ENCODE measurements at regions of chr12 and their contacts with region 1.

Region 1: DNA sequence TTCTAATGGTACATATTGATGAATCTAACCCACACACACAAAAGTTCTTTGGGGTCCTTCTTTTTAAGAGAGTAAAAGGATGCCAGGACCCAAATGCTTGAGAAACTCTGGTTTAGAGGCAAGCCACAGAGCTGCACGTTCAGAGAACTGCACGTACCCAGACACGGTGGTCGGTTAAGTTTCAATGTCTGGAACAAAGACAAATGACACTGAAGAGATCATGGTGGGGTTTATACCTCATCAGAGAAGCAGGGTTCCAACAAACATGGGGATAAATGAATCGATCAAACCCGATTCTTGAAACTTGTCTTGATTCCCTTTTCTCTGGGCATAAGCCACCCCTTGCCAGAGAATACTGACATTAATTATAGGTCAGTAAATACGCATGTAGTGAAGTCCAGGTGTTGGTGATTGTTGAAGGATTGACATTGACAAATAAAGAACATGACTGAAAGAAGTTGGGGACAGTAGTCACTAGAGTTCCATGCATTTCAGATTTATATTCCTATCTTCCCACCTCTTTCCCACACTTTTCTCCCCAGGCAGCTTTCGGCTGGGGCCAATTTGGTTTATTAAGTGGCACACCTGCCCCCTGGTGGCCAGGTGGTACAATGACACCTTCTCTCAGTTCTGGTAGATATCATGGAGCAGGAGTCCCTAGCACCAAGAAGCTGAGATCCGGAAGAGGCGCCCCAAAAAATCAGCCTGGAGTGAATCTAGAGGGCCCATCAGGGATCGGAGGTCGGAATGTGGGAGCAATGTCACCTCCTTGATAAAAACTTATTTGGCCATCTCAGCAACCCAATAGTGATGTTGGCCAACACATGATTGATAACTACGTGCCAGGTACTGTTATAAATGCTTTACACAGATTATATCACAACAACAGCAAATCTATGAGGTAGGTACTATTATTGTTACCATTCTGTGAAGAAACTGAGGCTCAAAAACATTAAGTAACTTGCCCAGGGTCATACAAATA is 17.8 kb upstream of the HDAC7 start:
- DNase-seq: peak; percentile 53 to 88 (median 76)

Region 2: DNA sequence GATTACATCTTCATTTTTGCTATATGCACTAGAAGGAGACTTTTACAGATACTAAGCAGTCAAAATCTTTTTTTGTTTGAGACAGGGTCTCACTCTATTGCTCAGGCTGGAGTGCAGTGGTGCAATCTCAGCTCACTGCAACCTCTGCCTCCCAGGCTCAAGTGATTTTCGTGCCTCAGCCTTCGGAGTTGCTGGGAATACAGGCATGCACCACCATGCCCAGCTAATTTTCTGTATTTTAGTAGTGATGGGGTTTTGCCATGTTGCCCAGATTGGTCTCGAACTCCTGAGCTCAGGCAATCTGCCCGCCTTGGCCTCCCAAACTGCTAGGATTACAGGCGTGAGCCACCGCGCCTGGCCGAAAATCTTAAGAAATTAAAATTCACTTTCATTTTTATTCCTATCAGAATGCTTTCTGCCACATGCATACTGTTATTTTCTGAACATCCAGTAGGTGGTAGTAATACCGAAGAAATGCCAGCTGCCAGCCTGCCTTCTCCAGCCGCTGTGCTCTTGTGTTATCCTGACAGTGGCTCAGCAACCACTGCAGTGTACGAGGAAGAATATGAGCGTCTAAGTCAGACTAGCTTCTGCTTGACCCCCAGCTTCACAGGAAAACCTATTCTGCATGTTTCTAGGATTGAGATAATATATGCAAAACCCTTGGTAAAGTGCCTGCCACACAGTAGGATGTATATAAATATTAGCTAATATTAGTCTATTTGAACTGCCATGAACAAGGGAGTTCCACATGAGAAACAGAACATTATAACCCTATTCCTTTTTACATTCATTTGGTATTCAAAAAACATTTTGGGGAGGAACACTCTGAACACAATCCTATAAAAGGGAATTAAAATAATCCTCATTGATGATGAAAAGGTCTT is 185.9 kb before region 1 on chr12:
- intact Hi-C with region 1: loop called (anchors 5 kb)
- DNase-seq: peak; percentile 47 to 90 (median 74)

Region 3: DNA sequence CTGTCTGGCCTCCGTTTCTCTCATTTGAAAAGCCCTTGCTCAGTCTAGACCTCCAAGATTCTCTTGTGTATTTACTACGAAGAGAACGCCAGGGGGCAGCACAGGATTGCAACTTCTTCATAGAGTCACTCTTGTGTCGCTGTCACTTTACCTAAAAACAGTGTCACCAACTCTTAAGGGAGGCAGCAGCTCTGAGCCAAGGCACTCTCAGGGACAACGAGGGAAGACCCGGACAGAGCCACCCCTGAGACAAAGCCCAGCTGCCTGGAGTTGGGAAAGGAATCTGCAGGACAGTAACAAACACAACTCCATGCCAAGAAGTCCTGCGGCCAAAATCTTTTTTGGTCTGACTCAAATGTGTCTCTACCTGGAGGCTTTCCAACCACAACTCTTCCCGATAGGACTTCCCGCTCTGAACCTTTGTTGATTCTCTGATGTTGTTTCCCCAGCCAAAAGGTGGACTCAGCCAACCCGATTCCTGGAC is 122.0 kb before region 1 on chr12:
- intact Hi-C with region 1: loop called (anchors 2 kb)
- DNase-seq: peak; percentile 76 to 97 (median 91)

Region 4: GRCh38 chr12:47779301-47779942 is 58.1 kb before region 1 on chr12:
- intact Hi-C with region 1: loop called (anchors 5 kb)
- DNase-seq: peak in 41 of 42 donors; percentile 88 to 98 (median 94)

Region 5: GRCh38 chr12:47797441-47797840 is 40.0 kb before region 1 on chr12:
- intact Hi-C with region 1: loop called (anchors 5 kb)
- DNase-seq: peak in 15 of 42 donors; percentile 44 to 81 (median 63)

Measured in head of caudate nucleus (tissue), 42 donors.